ENCODE measurements at regions of chr12 and their contacts with region 1.

Region 1: DNA sequence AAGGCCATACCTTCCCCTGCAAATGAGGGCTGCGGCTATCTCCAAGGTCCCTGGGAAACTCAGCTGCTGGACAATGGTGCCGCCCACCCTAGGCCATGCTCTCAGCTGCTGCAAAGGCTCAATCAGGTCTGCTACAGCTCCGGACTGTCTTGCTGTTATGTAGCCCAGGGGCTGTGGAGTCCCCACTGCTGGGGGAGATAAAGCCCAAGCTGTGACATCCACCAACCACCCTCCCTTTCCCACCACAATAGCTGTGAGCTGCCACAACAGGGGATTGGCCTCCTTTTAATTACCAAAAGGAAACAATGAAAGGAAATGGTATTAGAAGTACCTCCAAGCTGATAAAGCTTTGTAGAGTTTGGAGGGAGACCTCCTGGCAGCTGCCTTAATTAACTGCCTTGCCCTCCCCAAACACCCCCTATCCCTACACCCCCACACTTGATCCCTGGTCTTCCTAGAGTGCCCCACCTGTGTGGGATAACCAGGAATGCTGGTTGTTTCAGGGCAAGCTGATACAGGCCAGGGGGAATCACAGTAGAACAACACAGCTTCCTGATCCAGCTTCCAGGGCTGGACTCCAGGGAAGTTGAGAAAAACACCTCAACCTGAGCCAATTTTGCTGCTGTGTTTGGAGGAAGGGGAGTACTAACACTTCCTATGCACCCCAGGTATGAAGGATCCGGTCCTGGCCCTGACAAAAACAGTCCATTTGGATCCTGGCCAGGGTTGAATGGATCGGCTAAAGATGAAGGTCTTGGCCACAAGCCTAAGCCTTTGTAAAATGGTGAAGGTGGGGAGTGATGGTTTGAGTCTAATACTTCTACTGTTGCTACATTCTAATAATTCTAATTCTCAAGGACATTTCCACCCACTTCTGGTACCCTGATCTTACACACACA is at the start of gene VWF:
- DNase-seq: no peak
- ATAC-seq: peak; percentile 42
- total RNA-seq, gene VWF: 244 TPM

Region 2: GRCh38 chr12:6154730-6155459 is 30.2 kb after region 1 on chr12:
- intact Hi-C with region 1: loop called (anchors 1 kb)
- DNase-seq: peak; percentile 82
- ATAC-seq: peak; percentile 68